Endothelial cell of umbilical vein (primary cell): ENCODE measurements at regions of chr11 and their contacts with region 1.

Region 1: DNA sequence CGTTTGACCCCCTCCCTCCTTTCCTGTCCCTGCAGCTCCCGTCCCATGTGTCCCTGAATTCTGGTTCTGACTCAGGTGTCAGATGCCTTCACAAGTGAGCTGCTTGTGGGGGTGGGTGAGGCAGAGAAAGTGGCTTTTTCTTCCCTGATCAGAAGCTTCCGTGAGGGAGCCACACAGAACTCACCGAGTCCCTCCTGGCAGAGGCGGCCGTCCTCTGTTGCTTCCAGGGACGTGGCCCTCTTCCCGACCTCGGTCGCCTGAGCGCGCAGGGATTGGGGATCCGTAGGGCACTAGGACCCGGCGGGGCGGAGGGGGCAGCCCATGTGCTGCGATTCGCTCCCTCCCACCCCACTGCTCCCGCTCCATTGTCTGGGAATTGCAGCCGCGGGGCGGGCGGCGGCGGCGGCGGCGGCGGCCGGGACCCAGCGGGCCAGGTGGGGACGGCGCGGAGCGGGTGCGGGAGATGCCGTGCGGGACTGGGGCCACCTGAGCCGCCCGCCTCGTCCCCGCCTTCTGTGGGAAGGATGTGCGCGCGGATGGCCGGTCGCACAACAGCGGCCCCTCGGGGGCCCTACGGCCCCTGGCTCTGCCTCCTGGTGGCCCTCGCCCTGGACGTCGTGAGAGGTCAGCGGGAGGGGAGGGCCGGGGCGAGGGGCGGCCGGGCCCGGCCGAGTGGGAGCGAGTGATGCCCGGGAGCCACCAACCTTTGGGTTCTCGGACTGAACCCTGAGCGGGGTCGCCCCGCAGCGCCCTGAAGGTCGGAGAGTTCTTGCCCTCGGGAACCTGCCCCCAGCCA is at the start of gene TMEM132A:
- DNase-seq: peak; percentile 61
- H3K4me3 ChIP-seq: peak within 1 kb of the TSS; percentile 39 to 80 (median 44)
- H3K27ac ChIP-seq: no peak within 1 kb of the TSS
- H3K4me1 ChIP-seq: peaks cover 17% of the 10 kb centered on the region
- H3K27me3 ChIP-seq: no peaks in the 10 kb centered on the region
- CTCF ChIP-seq: peak in 1 of 2 donors; percentile 4
- POLR2A ChIP-seq: no peak
- total RNA-seq, gene TMEM132A: 106 and 120 TPM in 2 replicates

Region 2: DNA sequence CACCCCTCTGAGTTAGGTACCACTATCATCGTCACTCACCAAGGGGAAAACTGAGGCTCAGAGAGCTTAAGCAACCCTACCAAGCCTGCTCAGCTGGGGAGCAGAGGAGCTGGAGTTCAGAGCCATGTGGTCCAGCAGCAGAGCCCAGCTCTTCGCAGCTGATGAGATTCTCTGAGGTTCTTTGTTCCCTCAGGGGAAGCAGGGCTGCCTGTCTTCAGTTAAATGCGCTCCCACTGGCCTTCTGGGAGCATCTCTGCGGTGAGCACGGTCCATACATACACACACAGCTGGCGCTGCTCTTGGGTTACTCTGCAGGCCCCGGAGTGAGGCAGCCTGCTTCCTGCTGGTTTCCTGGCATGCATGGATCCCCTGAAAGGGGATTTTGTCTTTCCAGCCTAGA is 63.4 kb before region 1 on chr11:
- CTCF ChIA-PET with region 1: no interaction called
- POLR2A ChIA-PET with region 1: no interaction called
- dilution Hi-C with region 1: no loop called
- intact Hi-C with region 1: no loop called
- DNase-seq: no peak
- H3K4me3 ChIP-seq: no peak overlapping the region
- H3K27ac ChIP-seq: no peak overlapping the region
- H3K4me1 ChIP-seq: no peaks in the 10 kb centered on the region
- H3K27me3 ChIP-seq: no peaks in the 10 kb centered on the region
- CTCF ChIP-seq: no peak
- POLR2A ChIP-seq: no peak

Region 3: GRCh38 chr11:60913793-60914632 is 10.3 kb before region 1 on chr11 and contains the start of gene TMEM109:
- CTCF ChIA-PET with region 1: interaction called, 7 read pairs
- POLR2A ChIA-PET with region 1: interaction called, 5 read pairs
- dilution Hi-C with region 1: no loop called
- intact Hi-C with region 1: loop called (anchors 1 kb)
- DNase-seq: peak; percentile 98
- H3K4me3 ChIP-seq: peak within 1 kb of the TSS; percentile 43 to 79 (median 76)
- H3K27ac ChIP-seq: peak within 1 kb of the TSS; percentile 65
- H3K4me1 ChIP-seq: peaks cover 36% of the 10 kb centered on the region
- H3K27me3 ChIP-seq: peaks cover 0 to 2% of the 10 kb centered on the region in 2 experiments
- CTCF ChIP-seq: no peak
- POLR2A ChIP-seq: no peak
- total RNA-seq, gene TMEM109: 172 and 192 TPM in 2 replicates

Region 4: DNA sequence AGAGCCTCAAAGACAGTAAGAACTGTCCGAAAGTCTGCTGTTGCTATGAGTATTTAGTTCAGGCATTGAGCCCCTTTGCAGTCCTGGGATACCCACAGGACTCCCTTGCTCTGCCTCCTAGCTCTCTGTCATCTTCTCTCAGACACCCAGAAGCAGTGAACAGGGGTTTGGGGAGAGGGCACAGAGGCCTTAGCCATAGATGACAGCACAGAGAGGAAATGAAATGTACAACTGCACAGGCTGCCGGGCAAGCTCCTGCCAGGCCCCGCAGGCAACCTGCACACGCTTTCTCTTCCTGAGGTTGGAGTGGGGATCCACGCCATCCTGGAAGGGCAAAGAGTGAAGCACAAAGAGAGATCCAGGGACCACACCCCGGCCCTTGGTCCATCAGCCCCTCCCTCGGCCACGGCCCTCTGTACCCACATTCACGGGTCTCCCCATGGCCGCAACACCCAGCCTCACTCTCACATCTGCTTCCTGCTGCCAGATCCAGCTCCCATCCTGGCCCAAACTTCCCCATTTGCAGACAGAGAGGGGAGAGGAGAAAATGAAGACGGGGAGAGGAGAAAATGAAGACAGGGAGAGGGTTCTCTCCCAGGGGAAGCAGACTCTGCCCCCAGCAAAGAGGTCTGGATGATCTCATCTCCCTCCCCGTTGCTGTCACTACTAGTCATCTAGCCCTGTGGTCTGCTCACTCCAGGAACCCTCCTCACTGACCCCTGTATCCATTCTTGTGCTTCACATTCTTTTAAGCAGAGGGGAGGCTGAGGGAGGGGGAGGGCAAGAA is 87.8 kb after region 1 on chr11:
- CTCF ChIA-PET with region 1: no interaction called
- POLR2A ChIA-PET with region 1: no interaction called
- dilution Hi-C with region 1: no loop called
- intact Hi-C with region 1: no loop called
- DNase-seq: no peak
- H3K4me3 ChIP-seq: no peak overlapping the region
- H3K27ac ChIP-seq: no peak overlapping the region
- H3K4me1 ChIP-seq: no peaks in the 10 kb centered on the region
- H3K27me3 ChIP-seq: peaks cover 24 to 27% of the 10 kb centered on the region in 2 experiments
- CTCF ChIP-seq: no peak
- POLR2A ChIP-seq: no peak

Region 5: DNA sequence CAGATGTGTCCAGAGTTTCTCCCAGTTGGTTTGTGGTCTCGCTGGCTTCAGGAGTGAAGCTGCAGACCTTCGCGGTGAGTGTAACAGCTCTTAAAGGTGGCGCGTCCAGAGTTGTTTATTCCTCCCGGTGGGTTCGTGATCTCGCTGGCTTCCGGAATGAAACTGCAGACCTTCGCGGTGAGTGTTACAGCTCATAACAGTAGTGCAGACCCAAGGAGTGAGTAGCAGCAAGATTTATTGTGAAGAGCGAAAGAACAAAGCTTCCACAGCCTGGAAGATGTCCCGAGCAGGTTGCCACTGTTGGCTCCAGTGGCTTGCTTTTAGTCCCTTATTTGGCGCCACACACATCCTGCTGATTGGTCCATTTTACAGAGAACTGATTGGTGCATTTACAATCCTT is 277.2 kb after region 1 on chr11:
- CTCF ChIA-PET with region 1: no interaction called
- POLR2A ChIA-PET with region 1: no interaction called
- dilution Hi-C with region 1: no loop called
- intact Hi-C with region 1: no loop called
- DNase-seq: no peak
- H3K4me3 ChIP-seq: no peak overlapping the region
- H3K27ac ChIP-seq: no peak overlapping the region
- H3K4me1 ChIP-seq: no peaks in the 10 kb centered on the region
- H3K27me3 ChIP-seq: no peaks in the 10 kb centered on the region
- CTCF ChIP-seq: no peak
- POLR2A ChIP-seq: no peak